Body of pancreas (tissue), 4 donors: ENCODE measurements at regions of chr6 and their contacts with region 1.

Region 1: DNA sequence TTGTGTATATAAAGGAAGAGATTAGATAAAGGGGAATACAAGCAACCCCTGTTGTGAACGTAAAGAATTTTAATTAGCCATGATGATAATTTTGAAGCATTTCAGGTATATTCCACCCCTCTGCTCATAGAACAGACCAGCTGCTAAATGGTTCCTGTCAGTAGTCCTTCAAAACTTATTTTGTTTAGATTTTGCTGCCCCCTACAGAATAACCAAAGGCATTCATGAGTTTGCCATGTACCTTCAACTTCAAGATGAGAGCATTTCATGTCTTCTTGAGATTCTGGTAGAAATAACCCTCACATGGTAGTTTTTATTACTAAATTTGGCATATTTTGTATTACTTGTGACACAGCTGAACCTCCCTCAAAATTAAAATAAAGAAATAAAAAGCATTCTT is 1586.7 kb downstream of the HACE1 start:
- DNase-seq: no peak
- ATAC-seq: no peak
- H3K4me3 ChIP-seq: no peak overlapping the region
- H3K27ac ChIP-seq: no peak overlapping the region
- H3K4me1 ChIP-seq: no peaks in the 10 kb centered on the region
- H3K27me3 ChIP-seq: no peaks in the 10 kb centered on the region
- CTCF ChIP-seq: peak in 2 of 7 experiments; percentile 8 to 32
- POLR2A ChIP-seq: no peak

Region 2: GRCh38 chr6:103335412-103335811 is 62.4 kb after region 1 on chr6:
- intact Hi-C with region 1: loop called (anchors 10 kb)
- DNase-seq: no peak
- ATAC-seq: no peak
- H3K4me3 ChIP-seq: no peak overlapping the region
- H3K27ac ChIP-seq: no peak overlapping the region
- H3K4me1 ChIP-seq: no peaks in the 10 kb centered on the region
- H3K27me3 ChIP-seq: no peaks in the 10 kb centered on the region
- CTCF ChIP-seq: no peak
- POLR2A ChIP-seq: no peak